Aorta (tissue), 5 donors: ENCODE measurements at regions of chr3 and their contacts with region 1.

Region 1: GRCh38 chr3:138332472-138333076 is 2.9 kb upstream of the NME9 start:
- DNase-seq: no peak
- ATAC-seq: no peak
- H3K4me3 ChIP-seq: no peak overlapping the region
- H3K27ac ChIP-seq: no peak overlapping the region
- H3K4me1 ChIP-seq: no peaks in the 10 kb centered on the region
- H3K27me3 ChIP-seq: no peaks in the 10 kb centered on the region

Region 2: DNA sequence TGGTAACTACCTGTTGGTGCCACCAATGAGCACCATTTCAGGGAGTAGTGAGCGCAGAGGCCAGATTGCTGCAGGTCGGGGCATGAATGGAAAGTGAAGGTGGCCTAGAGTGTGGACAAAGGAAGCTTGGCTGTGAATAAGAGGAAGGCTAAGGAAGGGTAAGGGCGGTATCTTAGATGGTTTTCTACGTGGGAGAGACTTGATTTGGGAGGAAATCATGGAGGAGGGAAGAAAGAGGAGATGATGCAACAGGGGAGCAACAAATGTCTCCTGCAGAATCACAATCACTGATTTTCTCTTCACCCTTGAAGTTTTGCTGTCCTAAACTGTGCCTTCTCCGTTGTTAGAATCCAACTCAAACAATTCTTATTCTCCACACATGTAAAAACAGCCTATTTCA is 24.7 kb before region 1 on chr3:
- intact Hi-C with region 1: no loop called
- DNase-seq: no peak
- ATAC-seq: no peak
- H3K4me3 ChIP-seq: no peak overlapping the region
- H3K27ac ChIP-seq: no peak overlapping the region
- H3K4me1 ChIP-seq: no peaks in the 10 kb centered on the region
- H3K27me3 ChIP-seq: peaks cover 0 to 3% of the 10 kb centered on the region in 2 donors

Region 3: GRCh38 chr3:138367911-138368310 is 35.3 kb after region 1 on chr3:
- intact Hi-C with region 1: no loop called
- DNase-seq: peak; percentile 87 to 89
- ATAC-seq: peak; percentile 69
- H3K4me3 ChIP-seq: no peak overlapping the region
- H3K27ac ChIP-seq: no peak overlapping the region
- H3K4me1 ChIP-seq: no peaks in the 10 kb centered on the region
- H3K27me3 ChIP-seq: no peaks in the 10 kb centered on the region

Region 4: DNA sequence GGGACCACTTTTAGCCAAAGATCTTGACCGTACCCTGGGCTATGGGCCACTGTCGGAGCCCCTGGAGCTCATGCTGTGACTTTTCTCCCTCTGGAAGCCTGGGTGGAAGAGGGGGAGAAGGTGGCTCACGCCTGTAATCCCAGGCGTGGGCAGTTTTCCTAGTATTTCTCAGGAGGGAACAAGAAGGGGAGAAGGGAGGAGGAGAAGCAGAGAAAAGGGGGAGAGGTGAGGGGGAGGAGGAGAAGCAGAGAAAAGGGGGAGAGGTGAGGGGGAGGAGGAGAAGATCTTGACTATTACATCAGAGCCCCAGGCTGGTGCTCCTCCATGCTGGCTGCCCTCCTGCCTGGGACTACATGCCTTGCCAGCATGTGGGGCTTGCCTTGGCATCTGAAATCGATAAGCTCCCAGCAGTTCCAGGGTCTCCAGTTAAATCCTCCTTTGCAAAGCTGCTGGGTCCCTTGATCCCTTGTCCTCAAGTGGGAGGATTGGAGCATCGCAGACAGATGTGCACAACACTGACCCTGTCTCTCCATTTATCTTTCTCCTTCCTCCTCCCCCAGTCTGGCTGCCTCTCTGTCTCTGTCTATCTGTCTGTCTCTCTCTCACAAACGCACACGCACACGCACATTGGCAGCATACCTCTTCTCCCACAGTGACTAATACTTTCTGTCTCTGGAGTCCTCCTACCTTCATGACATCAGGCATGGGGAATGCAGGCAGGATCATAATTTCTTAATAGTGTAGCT is 57.4 kb after region 1 on chr3:
- intact Hi-C with region 1: loop called in 1 of 2 experiments (anchors 5 kb)
- DNase-seq: no peak
- ATAC-seq: peak; percentile 42
- H3K4me3 ChIP-seq: no peak overlapping the region
- H3K27ac ChIP-seq: peak overlapping the region in 1 of 2 donors; percentile 34
- H3K4me1 ChIP-seq: peaks cover 0 to 6% of the 10 kb centered on the region in 2 donors
- H3K27me3 ChIP-seq: no peaks in the 10 kb centered on the region

Region 5: GRCh38 chr3:138417559-138417982 is 85.0 kb after region 1 on chr3:
- intact Hi-C with region 1: loop called in 1 of 2 experiments (anchors 10 kb)
- DNase-seq: peak; percentile 79 to 88
- ATAC-seq: peak; percentile 84
- H3K4me3 ChIP-seq: no peak overlapping the region
- H3K27ac ChIP-seq: no peak overlapping the region
- H3K4me1 ChIP-seq: no peaks in the 10 kb centered on the region
- H3K27me3 ChIP-seq: no peaks in the 10 kb centered on the region

Region 6: GRCh38 chr3:139182143-139182542 is 849.6 kb after region 1 on chr3:
- intact Hi-C with region 1: no loop called
- DNase-seq: no peak
- ATAC-seq: no peak
- H3K4me3 ChIP-seq: no peak overlapping the region
- H3K27ac ChIP-seq: no peak overlapping the region
- H3K4me1 ChIP-seq: no peaks in the 10 kb centered on the region
- H3K27me3 ChIP-seq: no peaks in the 10 kb centered on the region